ENCODE measurements at regions of chr15 and their contacts with region 1.

Region 1: DNA sequence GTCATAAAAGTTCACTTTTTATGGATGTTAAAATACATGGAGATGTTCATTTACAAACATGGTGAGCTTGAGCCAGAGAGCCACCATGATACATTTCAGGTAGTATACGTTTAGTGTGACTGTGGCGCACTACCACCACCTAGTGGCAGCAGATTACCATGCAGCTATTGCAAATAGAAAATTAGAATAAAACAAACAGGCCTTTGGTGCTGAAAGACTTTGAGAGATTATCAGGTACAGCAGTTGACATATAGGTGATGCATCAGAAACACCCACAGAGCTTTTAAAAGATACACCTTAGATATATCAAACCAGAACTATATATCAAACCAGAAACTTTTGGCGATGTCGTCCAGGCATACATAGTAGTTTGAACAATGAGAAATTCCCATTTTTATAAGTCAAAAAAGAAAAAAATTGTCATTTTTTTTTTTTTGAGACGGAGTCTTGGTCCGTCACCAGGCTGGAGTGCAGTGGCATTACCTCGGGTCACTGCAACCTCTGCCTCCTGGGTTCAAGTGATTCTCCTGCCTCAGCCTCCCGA is 42.0 kb upstream of the ICE2 start:
- DNase-seq: peak; percentile 84
- H3K4me3 Mint-ChIP-seq: no peak overlapping the region
- H3K27ac Mint-ChIP-seq: peak overlapping the region; percentile 61
- H3K4me1 Mint-ChIP-seq: peaks cover 62% of the 10 kb centered on the region
- H3K27me3 Mint-ChIP-seq: no peaks in the 10 kb centered on the region

Region 2: DNA sequence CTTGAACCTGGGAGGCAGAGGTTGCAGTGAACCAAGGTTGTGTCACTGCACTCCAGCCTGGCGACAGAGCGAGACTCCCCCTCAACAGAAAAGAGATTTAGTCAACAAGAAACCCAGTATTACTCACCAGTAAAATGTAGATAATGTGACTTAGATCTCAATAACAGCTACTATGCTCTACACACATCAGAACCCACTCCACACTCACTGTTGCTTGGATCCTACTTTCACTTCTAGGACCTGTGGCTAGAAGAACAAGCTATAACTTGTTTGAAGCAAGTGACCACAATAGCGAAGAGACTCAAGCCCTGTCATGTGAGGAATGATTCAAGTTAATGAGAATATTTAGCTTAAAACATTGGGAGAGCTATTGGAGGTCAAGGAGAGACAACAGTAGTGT is 223.8 kb before region 1 on chr15:
- CTCF ChIA-PET with region 1: no interaction called
- POLR2A ChIA-PET with region 1: no interaction called
- DNase-seq: no peak
- H3K4me3 Mint-ChIP-seq: no peak overlapping the region
- H3K27ac Mint-ChIP-seq: no peak overlapping the region
- H3K4me1 Mint-ChIP-seq: no peaks in the 10 kb centered on the region
- H3K27me3 Mint-ChIP-seq: peaks cover 18% of the 10 kb centered on the region

Region 3: DNA sequence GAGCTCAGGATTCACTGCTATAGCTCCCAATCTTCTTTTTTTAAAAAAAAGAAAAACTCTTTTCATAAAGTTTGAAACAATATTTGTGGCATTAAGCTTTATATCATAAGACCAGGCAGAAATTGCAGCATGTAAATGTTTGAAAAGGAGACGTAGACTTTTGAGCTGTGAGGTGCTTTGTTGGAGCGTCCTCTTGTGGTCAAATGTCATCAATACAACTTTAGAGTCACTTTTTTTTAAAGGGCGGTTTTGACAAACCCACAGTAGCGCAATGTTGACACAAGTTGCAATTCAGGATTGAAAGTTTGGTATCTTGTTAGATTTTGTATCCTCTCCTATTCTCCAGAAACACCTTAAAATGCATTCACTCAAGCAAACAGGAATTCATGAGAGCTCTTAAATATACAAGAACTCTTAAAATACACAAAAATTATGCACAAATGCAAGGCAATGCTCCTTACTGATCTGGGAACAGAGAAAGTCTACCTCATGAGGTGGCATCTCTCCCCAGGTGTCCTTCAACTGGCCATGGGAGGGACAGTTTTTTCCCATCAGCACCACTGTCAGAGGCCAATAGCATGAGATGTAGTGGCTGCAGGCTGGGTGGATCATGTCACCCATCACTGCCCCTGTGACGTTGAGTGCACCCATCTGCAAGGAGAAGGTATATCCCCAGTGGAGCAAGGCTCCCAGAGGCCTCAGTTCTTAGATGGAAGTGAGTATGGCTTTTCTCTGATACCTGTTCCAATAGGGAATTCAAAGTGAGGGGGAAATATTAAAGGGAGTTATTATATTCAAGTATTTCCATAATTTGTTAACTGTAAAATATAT is 193.9 kb before region 1 on chr15:
- CTCF ChIA-PET with region 1: interaction called, 25 read pairs
- POLR2A ChIA-PET with region 1: no interaction called
- DNase-seq: peak; percentile 39
- H3K4me3 Mint-ChIP-seq: no peak overlapping the region
- H3K27ac Mint-ChIP-seq: no peak overlapping the region
- H3K4me1 Mint-ChIP-seq: peaks cover 15% of the 10 kb centered on the region
- H3K27me3 Mint-ChIP-seq: peaks cover 60% of the 10 kb centered on the region

Region 4: DNA sequence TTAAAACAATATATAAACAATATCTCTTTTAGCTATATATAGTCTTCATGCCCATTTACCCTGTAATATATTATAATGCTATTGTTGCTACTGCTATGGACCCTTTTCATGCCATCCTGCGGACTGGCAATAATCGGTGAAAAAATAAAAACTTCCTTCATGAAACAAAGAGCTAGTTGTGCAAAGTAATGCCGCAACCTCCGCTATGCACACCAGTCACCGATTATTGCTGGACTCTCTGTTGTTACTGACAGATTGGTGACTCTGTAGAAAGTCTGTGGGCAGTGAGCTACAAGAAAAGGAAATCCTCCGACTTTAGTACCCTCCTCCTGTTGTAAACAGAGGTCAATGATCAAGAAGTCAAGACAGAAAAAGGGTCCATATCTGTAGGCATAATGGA is 24.0 kb before region 1 on chr15:
- CTCF ChIA-PET with region 1: interaction called, 10 read pairs
- POLR2A ChIA-PET with region 1: no interaction called
- DNase-seq: no peak
- H3K4me3 Mint-ChIP-seq: no peak overlapping the region
- H3K27ac Mint-ChIP-seq: no peak overlapping the region
- H3K4me1 Mint-ChIP-seq: peaks cover 10% of the 10 kb centered on the region
- H3K27me3 Mint-ChIP-seq: no peaks in the 10 kb centered on the region

Region 5: GRCh38 chr15:60541481-60542299 is 20.8 kb after region 1 on chr15:
- CTCF ChIA-PET with region 1: interaction called, 21 read pairs
- POLR2A ChIA-PET with region 1: interaction called, 12 read pairs
- DNase-seq: no peak
- H3K4me3 Mint-ChIP-seq: peak overlapping the region; percentile 43
- H3K27ac Mint-ChIP-seq: peak overlapping the region; percentile 86
- H3K4me1 Mint-ChIP-seq: peaks cover 90% of the 10 kb centered on the region
- H3K27me3 Mint-ChIP-seq: no peaks in the 10 kb centered on the region

Region 6: DNA sequence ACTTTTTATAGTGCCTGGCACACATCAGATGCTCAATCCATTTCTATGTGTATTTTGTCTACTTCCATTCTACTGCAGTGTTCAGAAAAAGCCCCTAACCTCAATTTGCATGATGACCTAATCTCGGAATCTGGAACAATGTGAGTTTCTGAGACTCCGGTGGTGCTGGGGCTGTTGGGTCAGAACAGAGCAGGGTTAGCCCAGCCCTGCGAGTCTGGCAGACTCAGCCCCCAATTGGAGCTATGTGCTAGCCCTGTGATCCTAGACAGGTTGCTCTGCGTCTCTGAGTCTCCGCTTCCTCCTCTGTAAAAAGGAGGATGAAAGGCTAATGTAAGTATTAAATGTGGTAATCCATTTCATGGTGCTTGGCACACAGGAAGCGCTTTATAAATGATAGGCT is 53.0 kb after region 1 on chr15:
- CTCF ChIA-PET with region 1: interaction called, 22 read pairs
- POLR2A ChIA-PET with region 1: interaction called, 8 read pairs
- DNase-seq: peak; percentile 44
- H3K4me3 Mint-ChIP-seq: peak overlapping the region; percentile 52
- H3K27ac Mint-ChIP-seq: peak overlapping the region; percentile 83
- H3K4me1 Mint-ChIP-seq: peaks cover 86% of the 10 kb centered on the region
- H3K27me3 Mint-ChIP-seq: no peaks in the 10 kb centered on the region

Region 7: GRCh38 chr15:60932051-60932915 is 411.4 kb after region 1 on chr15:
- CTCF ChIA-PET with region 1: interaction called, 19 read pairs
- POLR2A ChIA-PET with region 1: interaction called, 4 read pairs
- DNase-seq: peak; percentile 74
- H3K4me3 Mint-ChIP-seq: no peak overlapping the region
- H3K27ac Mint-ChIP-seq: no peak overlapping the region
- H3K4me1 Mint-ChIP-seq: peaks cover 26% of the 10 kb centered on the region
- H3K27me3 Mint-ChIP-seq: peaks cover 53% of the 10 kb centered on the region

Measured in activated CD4-positive, alpha-beta memory T cell treated with anti-CD3 and anti-CD28 coated beads, Interleukin-2, amount 10 ng/mL, durations not matched to agents 7 days and 5 days (primary cell).